CD4-positive, alpha-beta T cell (primary cell): ENCODE measurements at regions of chr9 and their contacts with region 1.

Region 1: DNA sequence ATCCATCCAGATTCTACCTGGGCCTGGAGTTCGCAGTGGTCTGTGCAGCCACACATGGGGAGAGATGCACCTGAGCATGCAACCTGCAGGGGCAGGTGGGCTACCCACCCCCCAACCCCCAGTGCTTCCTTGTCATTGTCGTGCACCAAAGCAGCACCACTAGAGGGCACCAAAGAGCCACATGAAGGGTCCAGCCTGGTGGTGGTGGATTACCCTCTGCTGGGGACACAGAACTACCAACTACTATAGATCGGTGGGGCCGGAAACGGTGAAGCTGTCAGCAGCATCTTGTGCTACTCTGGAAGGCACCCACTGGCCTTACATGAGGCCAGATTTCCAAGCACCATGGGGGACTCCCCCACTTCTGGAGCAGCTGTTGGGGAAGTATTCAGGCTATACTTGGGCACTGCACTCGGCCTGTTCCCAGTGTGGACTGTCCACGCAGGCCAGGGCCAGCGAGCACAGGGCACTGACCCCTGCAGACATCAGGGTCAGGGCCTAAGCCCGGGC is 60.2 kb upstream of the TBC1D2 start:
- DNase-seq: peak; percentile 60 to 83 (median 68)
- ATAC-seq: peak; percentile 81
- H3K4me3 ChIP-seq: no peak overlapping the region
- H3K4me3 Mint-ChIP-seq: no peak overlapping the region
- H3K27ac ChIP-seq: no peak overlapping the region
- H3K27ac Mint-ChIP-seq: no peak overlapping the region
- H3K4me1 ChIP-seq: no peaks in the 10 kb centered on the region
- H3K4me1 Mint-ChIP-seq: no peaks in the 10 kb centered on the region
- H3K27me3 ChIP-seq: no peaks in the 10 kb centered on the region
- H3K27me3 Mint-ChIP-seq: no peaks in the 10 kb centered on the region
- CTCF ChIP-seq: peak; percentile 87

Region 2: GRCh38 chr9:98775831-98776441 is 460.3 kb after region 1 on chr9:
- CTCF ChIA-PET with region 1: interaction called, 3 read pairs
- POLR2A ChIA-PET with region 1: no interaction called
- intact Hi-C with region 1: loop called in 1 of 2 experiments (anchors 5 kb)
- DNase-seq: peak in 5 of 14 experiments; percentile 8 to 63 (median 40)
- ATAC-seq: peak; percentile 34
- H3K4me3 ChIP-seq: no peak overlapping the region
- H3K4me3 Mint-ChIP-seq: no peak overlapping the region
- H3K27ac ChIP-seq: no peak overlapping the region
- H3K27ac Mint-ChIP-seq: no peak overlapping the region
- H3K4me1 ChIP-seq: no peaks in the 10 kb centered on the region
- H3K4me1 Mint-ChIP-seq: no peaks in the 10 kb centered on the region
- H3K27me3 ChIP-seq: no peaks in the 10 kb centered on the region
- H3K27me3 Mint-ChIP-seq: no peaks in the 10 kb centered on the region
- CTCF ChIP-seq: peak; percentile 33

Region 3: DNA sequence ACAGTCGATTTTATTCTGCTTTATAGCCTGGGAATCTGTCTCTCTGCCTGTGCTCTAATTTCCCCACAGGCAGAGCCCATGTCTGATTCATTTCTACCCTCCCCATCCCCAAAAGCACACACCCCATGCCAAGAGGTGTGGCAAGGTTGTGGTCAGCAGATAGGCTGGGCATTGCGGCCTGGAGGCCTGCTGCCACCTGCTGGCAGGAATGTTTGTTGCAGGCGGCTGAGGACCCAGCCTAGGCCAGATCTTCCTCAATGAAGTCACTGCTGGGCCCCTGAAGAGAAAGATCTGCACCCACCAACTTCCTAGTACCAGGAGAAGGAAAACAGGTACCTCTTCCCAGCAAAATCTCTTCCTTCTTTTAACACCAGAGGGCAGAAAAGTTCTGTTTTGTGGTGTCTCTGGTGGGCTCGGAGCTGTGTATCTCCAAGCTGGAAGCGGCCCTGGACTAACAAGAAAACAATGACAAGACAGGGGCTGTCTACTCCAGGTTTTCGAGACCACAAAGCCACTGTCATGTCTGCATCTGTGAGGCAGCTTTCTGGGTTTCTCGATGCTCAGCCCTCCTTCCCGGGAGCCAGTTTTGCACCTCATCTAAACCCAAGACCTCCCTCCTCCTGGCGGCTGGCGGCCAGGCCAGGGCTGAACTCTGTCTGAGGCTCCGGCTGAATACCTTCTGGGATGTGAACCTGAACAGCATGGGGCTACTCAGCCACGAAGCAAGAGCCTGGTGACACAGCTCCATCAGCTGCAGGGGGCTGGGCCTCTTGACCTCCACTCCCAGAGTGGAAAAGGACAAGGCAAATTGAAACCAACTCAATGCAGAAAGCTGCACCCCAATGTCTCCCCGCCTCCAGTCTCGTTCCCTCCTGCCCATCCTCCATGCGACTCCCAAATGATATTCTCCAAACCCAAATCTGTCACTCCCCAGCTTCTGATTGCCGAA is 475.8 kb after region 1 on chr9:
- CTCF ChIA-PET with region 1: no interaction called
- POLR2A ChIA-PET with region 1: no interaction called
- intact Hi-C with region 1: loop called in 1 of 2 experiments (anchors 2 kb)
- DNase-seq: peak; percentile 19 to 80 (median 40)
- ATAC-seq: peak; percentile 69
- H3K4me3 ChIP-seq: no peak overlapping the region
- H3K4me3 Mint-ChIP-seq: no peak overlapping the region
- H3K27ac ChIP-seq: no peak overlapping the region
- H3K27ac Mint-ChIP-seq: no peak overlapping the region
- H3K4me1 ChIP-seq: peaks cover 24% of the 10 kb centered on the region
- H3K4me1 Mint-ChIP-seq: peaks cover 37% of the 10 kb centered on the region
- H3K27me3 ChIP-seq: no peaks in the 10 kb centered on the region
- H3K27me3 Mint-ChIP-seq: no peaks in the 10 kb centered on the region
- CTCF ChIP-seq: peak; percentile 94